HCT116 (cell line): ENCODE measurements at regions of chr16 and their contacts with region 1.

Region 1: GRCh38 chr16:58025351-58026138 is at the start of gene MMP15:
- DNase-seq: peak; percentile 94
- ATAC-seq: peak; percentile 70
- H3K4me3 ChIP-seq: peak within 1 kb of the TSS; percentile 78 to 94
- H3K27ac ChIP-seq: peak within 1 kb of the TSS; percentile 93
- H3K4me1 ChIP-seq: peaks cover 29 to 52% of the 10 kb centered on the region in 2 experiments
- H3K27me3 ChIP-seq: no peaks in the 10 kb centered on the region
- CTCF ChIP-seq: no peak
- POLR2A ChIP-seq: peak; percentile 60
- RAD21 ChIP-seq: no peak
- total RNA-seq, gene MMP15: 38.5 TPM

Region 2: DNA sequence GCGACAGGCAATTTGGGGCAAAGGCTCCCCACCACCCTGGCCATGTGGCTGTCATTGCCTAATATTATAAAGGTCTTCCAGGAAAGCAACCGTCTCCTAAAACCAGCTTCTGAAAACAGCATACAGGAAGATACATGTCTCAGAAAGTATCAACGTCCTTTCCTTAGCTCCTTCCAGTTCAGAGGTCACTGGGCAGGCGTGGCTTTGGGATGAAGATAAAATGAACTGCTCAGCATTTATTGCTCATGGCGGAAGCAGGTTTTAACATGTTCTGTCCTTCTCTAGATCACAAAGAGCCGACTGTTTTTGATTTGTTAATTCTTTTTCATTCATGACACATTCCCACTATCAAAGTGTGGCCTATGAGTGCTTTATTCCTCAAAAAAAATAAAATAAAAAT is 95.6 kb after region 1 on chr16:
- CTCF ChIA-PET with region 1: interaction called, 16 read pairs
- POLR2A ChIA-PET with region 1: interaction called, 4 read pairs
- RAD21 ChIA-PET with region 1: interaction called in 1 of 2 experiments, 3 read pairs
- intact Hi-C with region 1: loop called (anchors 1 kb)
- DNase-seq: no peak
- ATAC-seq: no peak
- H3K4me3 ChIP-seq: no peak overlapping the region
- H3K27ac ChIP-seq: no peak overlapping the region
- H3K4me1 ChIP-seq: peaks cover 3 to 8% of the 10 kb centered on the region in 2 experiments; a peak in 2 of 4 replicates
- H3K27me3 ChIP-seq: no peaks in the 10 kb centered on the region
- CTCF ChIP-seq: no peak
- POLR2A ChIP-seq: no peak
- RAD21 ChIP-seq: no peak

Region 3: GRCh38 chr16:58198022-58198683 is 172.6 kb after region 1 on chr16 and contains the start of gene CSNK2A2:
- CTCF ChIA-PET with region 1: no interaction called
- POLR2A ChIA-PET with region 1: no interaction called
- RAD21 ChIA-PET with region 1: no interaction called
- intact Hi-C with region 1: loop called (anchors 5 kb)
- DNase-seq: peak; percentile 32
- ATAC-seq: peak; percentile 96
- H3K4me3 ChIP-seq: peak within 1 kb of the TSS; percentile 88 to 96
- H3K27ac ChIP-seq: peak within 1 kb of the TSS; percentile 18; the same call in 1 of the 2 replicates
- H3K4me1 ChIP-seq: peaks cover 16 to 25% of the 10 kb centered on the region in 2 experiments
- H3K27me3 ChIP-seq: no peaks in the 10 kb centered on the region
- CTCF ChIP-seq: 0 out of 6 replicates have a peak, but pooled peaks of 1 of the 3 experiments have one; percentile 29
- POLR2A ChIP-seq: no peak
- RAD21 ChIP-seq: no peak
- total RNA-seq, gene CSNK2A2: 97.7 TPM

Region 4: DNA sequence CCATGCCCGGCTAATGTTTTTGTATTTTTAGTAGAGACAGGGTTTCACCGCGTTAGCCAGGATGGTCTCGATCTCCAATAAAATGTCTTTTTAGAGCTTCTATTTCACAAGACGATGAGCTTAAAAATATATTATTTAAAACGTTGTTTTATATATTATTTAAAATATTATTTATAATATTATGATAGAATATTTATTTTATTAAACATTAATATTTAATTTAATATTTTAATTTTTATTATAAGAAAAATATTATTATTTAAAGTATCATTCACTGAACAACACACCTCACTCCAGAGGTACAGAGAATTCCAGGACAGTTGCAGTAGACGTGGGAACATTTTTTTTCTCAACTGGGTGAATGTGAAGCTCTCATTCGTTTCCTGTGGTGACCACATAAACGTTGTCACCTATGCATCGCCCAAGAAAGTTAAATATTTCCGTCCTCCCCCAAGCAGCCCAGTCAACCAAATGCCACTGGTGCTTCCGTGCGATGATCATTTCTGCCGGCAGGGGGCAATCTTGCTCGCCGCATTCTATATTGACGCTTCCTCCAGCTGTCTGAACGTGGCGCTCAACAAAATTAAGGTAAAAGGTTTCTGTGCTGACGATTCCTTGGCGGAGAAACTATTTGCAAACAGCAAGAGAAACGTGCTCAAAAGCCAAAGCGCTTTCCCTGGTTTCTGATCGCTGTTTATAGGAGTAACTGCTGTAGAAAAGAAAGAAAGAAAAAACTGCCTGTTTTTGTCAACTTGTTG is 311.0 kb after region 1 on chr16:
- CTCF ChIA-PET with region 1: no interaction called
- POLR2A ChIA-PET with region 1: interaction called, 4 read pairs
- RAD21 ChIA-PET with region 1: no interaction called
- intact Hi-C with region 1: loop called (anchors 10 kb)
- DNase-seq: peak; percentile 77
- ATAC-seq: peak; percentile 81
- H3K4me3 ChIP-seq: 0 out of 4 replicates have a peak overlapping the region, but pooled peaks of 1 of the 2 experiments have one; percentile 2
- H3K27ac ChIP-seq: no peak overlapping the region
- H3K4me1 ChIP-seq: peaks cover 6 to 10% of the 10 kb centered on the region in 2 experiments
- H3K27me3 ChIP-seq: no peaks in the 10 kb centered on the region
- CTCF ChIP-seq: peak; percentile 91 to 98 (median 95)
- POLR2A ChIP-seq: no peak
- RAD21 ChIP-seq: peak; percentile 89

Region 5: GRCh38 chr16:58755989-58756649 is 730.6 kb after region 1 on chr16:
- CTCF ChIA-PET with region 1: no interaction called
- POLR2A ChIA-PET with region 1: no interaction called
- RAD21 ChIA-PET with region 1: no interaction called
- intact Hi-C with region 1: loop called (anchors 5 kb)
- DNase-seq: peak; percentile 66
- ATAC-seq: peak; percentile 98
- H3K4me3 ChIP-seq: no peak overlapping the region
- H3K27ac ChIP-seq: no peak overlapping the region
- H3K4me1 ChIP-seq: no peaks in the 10 kb centered on the region; a peak in 1 of 4 replicates
- H3K27me3 ChIP-seq: no peaks in the 10 kb centered on the region
- CTCF ChIP-seq: peak; percentile 60 to 77 (median 76); a peak in 5 of 6 replicates
- POLR2A ChIP-seq: no peak
- RAD21 ChIP-seq: peak; percentile 84